Posterior vena cava (tissue), 2 donors: ENCODE measurements at regions of chr9 and their contacts with region 1.

Region 1: DNA sequence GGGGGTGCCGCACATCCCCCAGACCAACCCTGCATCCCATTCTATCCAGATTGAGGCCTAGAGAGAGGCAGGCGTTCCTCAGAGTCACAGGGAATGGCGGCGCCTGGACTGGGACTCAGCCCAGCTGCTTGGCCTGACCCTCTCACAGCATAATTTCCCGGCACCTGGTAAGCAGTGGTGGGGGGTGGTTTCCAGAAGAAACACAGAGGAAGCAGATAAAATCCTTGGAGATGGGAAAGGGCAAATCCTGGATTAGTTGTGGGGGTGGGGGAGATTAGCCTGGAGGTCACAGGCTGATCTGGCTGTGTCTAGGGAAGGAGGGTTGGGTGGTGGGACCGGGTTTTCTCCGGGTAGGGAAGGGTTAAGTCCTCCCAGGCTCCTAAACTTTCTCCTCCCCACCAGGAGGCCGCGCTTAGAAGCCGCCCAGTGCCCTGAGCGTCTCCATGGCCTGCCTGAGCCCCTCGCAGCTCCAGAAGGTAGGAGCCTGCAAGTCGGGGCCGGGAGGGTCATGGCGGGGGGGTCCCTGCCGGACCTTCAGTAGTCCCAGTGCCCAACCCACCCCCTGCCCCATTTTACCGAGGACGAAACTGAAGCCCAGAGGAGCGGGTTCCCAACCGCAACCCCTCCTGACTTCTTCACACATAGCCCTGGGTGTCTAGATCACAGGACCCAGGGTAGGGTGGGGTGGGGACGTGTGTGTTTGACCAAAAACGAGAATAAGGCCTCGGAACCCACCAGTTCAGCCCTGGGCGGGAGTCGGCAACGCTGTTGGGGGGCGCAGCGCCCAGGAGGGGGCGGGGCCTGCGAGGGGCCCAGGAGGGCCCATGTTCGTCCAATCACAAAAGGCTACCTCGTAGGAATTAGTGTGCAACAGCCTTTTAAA is 1.3 kb downstream of the PHYHD1 start:
- DNase-seq: no peak

Region 2: GRCh38 chr9:128881901-128882681 is 40.0 kb before region 1 on chr9 and contains the starts of genes KYAT1 and LRRC8A:
- intact Hi-C with region 1: loop called in 1 of 2 experiments (anchors 2 kb)
- DNase-seq: peak; percentile 99
- total RNA-seq, gene KYAT1: 5.1 to 5.5 TPM
- total RNA-seq, gene LRRC8A: 49.1 to 58.3 TPM

Region 3: DNA sequence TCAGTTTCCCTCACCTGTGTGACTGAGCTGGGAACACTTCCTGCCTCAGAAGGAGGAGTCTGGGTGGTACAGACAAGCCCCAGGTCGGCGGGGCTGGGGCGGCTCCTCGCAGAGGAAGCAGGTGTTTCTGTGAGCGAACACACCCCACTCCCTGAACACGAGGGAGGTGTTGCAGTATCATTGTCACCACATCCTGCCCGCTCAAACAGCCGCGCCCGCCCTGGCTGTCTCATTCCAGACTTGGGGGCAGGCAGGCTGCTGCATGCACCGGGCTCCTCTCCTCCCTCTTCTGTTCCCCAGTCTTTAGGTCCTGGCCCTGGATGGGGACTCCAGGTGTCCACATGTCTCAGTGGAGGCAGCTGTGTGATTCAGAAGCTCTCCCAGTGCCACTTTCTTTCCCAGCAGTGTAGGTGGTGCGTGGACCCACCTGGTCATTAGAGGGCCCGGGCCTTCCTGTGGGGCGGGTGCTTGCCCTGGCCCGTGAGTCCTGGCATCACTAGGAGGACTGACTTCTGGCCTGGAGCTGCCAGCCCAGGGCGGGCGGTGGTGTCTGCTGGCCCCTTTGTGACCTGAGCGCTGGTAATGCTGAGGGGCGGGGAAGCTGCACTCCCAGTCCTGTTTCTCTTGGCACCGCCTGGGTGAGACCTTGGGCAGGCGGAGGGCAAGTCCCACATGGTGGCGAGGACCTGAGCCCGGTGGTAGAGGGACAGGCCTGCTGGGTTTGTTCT is 19.6 kb before region 1 on chr9:
- intact Hi-C with region 1: no loop called
- DNase-seq: no peak

Region 4: GRCh38 chr9:128972956-128973355 is 50.8 kb after region 1 on chr9:
- intact Hi-C with region 1: no loop called
- DNase-seq: no peak

Region 5: GRCh38 chr9:129080602-129081387 is 158.7 kb after region 1 on chr9 and contains the start of gene DOLPP1:
- intact Hi-C with region 1: no loop called
- DNase-seq: peak; percentile 100
- total RNA-seq, gene DOLPP1: 4.4 to 5.7 TPM